GM12878 (cell line): ENCODE measurements at regions of chr17 and their contacts with region 1.

Region 1: DNA sequence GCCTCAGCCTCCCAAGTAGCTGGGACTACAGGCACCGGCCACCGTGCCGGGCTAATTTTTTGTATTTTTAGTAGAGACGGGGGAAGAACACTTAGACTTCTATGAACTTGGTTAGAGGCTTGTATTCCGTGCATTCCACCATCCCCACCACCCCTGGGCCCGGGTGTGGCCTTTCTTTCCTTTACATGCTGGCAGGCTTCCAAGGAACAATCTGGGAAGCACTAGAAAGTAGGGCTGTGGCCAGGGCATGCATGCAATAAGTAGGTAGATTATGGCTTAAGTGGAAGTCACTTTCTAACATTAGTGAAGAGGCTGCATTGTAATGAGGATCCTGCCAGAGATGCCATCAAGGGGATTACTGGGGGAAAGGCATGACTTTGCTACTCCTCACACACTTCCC is 171.6 kb downstream of the SHISA6 start:
- DNase-seq: no peak
- ATAC-seq: no peak
- H3K4me3 ChIP-seq: no peak overlapping the region
- H3K27ac ChIP-seq: no peak overlapping the region
- H3K4me1 ChIP-seq: no peaks in the 10 kb centered on the region
- H3K27me3 ChIP-seq: no peaks in the 10 kb centered on the region
- CTCF ChIP-seq: no peak
- EP300 ChIP-seq: no peak
- POLR2A ChIP-seq: no peak
- RAD21 ChIP-seq: no peak

Region 2: DNA sequence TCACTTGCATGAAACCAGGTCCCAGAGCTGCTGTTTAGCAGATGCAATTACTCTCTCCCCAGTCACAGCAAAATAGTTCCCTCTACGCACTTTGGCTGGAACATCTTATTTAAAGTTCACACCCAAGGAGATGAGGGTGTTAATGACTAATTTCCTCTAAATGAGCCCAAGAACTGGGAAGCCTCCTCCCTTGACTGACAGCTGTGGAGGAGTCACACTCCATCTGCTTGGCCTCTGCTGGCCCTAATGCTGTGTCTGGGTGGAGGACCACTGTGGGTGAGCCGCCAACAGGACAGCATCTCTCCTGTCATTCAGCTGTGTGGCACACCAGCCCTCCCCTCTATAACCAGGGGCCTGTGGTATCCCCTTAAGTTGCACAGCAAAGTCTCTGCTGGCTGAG is 56.3 kb before region 1 on chr17:
- CTCF ChIA-PET with region 1: no interaction called
- POLR2A ChIA-PET with region 1: no interaction called
- RAD21 ChIA-PET with region 1: no interaction called
- SMC1A ChIA-PET with region 1: no interaction called
- in situ Hi-C with region 1: loop called (anchors 5 kb)
- intact Hi-C with region 1: loop called (anchors 10 kb)
- DNase-seq: no peak
- ATAC-seq: no peak
- H3K4me3 ChIP-seq: no peak overlapping the region
- H3K27ac ChIP-seq: no peak overlapping the region
- H3K4me1 ChIP-seq: no peaks in the 10 kb centered on the region
- H3K27me3 ChIP-seq: no peaks in the 10 kb centered on the region
- CTCF ChIP-seq: no peak
- EP300 ChIP-seq: no peak
- POLR2A ChIP-seq: no peak
- RAD21 ChIP-seq: no peak